Activated CD8-positive, alpha-beta memory T cell treated with anti-CD3 and anti-CD28 coated beads, Interleukin-2, amount 10 ng/mL, durations not matched to agents 7 days and 5 days (primary cell): ENCODE measurements at regions of chr2 and their contacts with region 1.

Region 1: GRCh38 chr2:68121873-68122679 is 35.6 kb upstream of the PNO1 start:
- DNase-seq: peak; percentile 78
- ATAC-seq: peak; percentile 27
- H3K4me3 Mint-ChIP-seq: no peak overlapping the region
- H3K27ac Mint-ChIP-seq: no peak overlapping the region
- H3K4me1 Mint-ChIP-seq: peaks cover 4% of the 10 kb centered on the region
- H3K27me3 Mint-ChIP-seq: peaks cover 6% of the 10 kb centered on the region

Region 2: GRCh38 chr2:68157402-68158133 is 35.5 kb after region 1 on chr2 and contains the start of gene PNO1:
- CTCF ChIA-PET with region 1: interaction called, 10 read pairs
- DNase-seq: peak; percentile 98
- ATAC-seq: peak; percentile 91
- H3K4me3 Mint-ChIP-seq: peak within 1 kb of the TSS; percentile 92
- H3K27ac Mint-ChIP-seq: peak within 1 kb of the TSS; percentile 98
- H3K4me1 Mint-ChIP-seq: peaks cover 39% of the 10 kb centered on the region
- H3K27me3 Mint-ChIP-seq: no peaks in the 10 kb centered on the region
- total RNA-seq, gene PNO1: 10.5 to 15.1 TPM

Region 3: DNA sequence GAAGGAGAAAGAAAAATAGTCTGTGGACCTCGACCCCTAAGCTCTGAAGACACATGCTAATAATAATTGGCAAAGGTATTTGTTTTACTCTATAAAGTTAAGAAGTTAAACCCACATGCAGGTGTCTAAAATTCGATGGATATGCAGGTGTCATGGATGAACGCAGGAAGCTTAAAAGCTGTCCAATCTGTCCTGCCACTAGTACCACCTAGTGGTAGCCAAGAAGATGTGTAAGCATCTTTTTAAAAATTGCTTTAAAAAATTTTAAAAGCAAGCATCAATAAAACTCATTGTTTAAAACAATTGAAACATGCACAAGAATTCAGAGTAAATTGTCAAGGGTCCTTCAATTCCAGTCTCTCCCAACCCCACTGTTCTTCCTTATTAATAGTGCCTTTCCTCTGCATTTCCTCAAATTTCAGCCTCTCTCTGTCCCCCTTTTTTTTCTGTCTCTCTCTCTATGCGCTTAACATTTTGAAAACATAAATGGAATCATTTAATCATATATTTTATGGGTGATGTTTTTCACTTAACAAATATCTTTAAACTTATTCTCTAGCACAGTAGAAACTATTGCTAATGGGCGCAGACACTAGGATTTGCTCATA is 160.8 kb after region 1 on chr2:
- CTCF ChIA-PET with region 1: interaction called, 55 read pairs
- DNase-seq: no peak
- ATAC-seq: peak; percentile 58
- H3K4me3 Mint-ChIP-seq: no peak overlapping the region
- H3K27ac Mint-ChIP-seq: no peak overlapping the region
- H3K4me1 Mint-ChIP-seq: peaks cover 9% of the 10 kb centered on the region
- H3K27me3 Mint-ChIP-seq: peaks cover 43% of the 10 kb centered on the region

Region 4: GRCh38 chr2:68295516-68295915 is 173.4 kb after region 1 on chr2:
- CTCF ChIA-PET with region 1: interaction called, 24 read pairs
- DNase-seq: no peak
- ATAC-seq: no peak
- H3K4me3 Mint-ChIP-seq: no peak overlapping the region
- H3K27ac Mint-ChIP-seq: no peak overlapping the region
- H3K4me1 Mint-ChIP-seq: peaks cover 5% of the 10 kb centered on the region
- H3K27me3 Mint-ChIP-seq: peaks cover 15% of the 10 kb centered on the region

Region 5: DNA sequence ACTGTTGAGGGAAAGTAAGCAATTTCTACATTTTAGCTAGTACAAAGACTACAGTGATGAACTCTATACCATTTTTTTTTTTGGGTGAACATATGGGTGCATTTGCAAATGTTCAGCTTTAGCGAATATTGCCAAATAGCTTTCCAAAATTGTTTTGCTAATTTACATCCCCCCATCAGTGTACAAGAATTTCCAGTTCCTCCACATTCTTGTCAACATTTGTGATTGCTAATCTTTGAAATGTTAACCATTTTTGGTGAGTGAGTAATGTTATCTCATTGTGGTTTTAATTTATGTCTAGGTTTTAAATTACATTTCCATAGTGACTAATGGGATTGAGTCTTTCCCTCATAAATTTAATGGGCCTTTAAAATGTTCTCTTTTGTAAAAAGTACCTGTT is 214.1 kb after region 1 on chr2:
- CTCF ChIA-PET with region 1: no interaction called
- DNase-seq: no peak
- ATAC-seq: no peak
- H3K4me3 Mint-ChIP-seq: no peak overlapping the region
- H3K27ac Mint-ChIP-seq: no peak overlapping the region
- H3K4me1 Mint-ChIP-seq: no peaks in the 10 kb centered on the region
- H3K27me3 Mint-ChIP-seq: peaks cover 29% of the 10 kb centered on the region

Region 6: DNA sequence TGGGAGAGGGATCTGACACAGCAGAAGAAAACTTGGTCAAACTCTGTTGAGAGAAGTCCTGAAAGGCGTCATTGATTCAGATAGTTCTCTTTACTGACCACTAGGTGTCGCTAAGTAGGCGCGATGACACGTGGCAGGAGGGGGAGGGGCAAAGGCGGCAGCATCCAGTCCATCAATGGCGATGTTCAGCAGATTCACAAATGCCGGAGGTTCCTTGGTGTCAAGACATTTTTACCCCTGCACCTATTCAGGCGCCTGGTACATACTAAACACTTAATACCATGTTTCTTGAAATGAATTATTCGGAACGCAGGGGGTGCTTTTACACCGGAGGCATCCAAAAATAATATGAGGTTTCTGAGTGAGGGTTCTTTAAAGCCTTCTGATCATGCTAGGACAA is 240.0 kb after region 1 on chr2:
- CTCF ChIA-PET with region 1: interaction called, 10 read pairs
- DNase-seq: peak; percentile 87
- ATAC-seq: peak; percentile 81
- H3K4me3 Mint-ChIP-seq: peak overlapping the region; percentile 48
- H3K27ac Mint-ChIP-seq: peak overlapping the region; percentile 79
- H3K4me1 Mint-ChIP-seq: peaks cover 38% of the 10 kb centered on the region
- H3K27me3 Mint-ChIP-seq: no peaks in the 10 kb centered on the region